ENCODE measurements at regions of chr11 and their contacts with region 1.

Region 1: GRCh38 chr11:121534131-121535093 is 81.6 kb upstream of the SORL1-AS1 start:
- DNase-seq: no peak
- ATAC-seq: peak in 1 of 2 donors; percentile 72
- H3K4me3 ChIP-seq: no peak overlapping the region
- H3K27ac ChIP-seq: no peak overlapping the region
- H3K4me1 ChIP-seq: no peaks in the 10 kb centered on the region
- H3K27me3 ChIP-seq: no peaks in the 10 kb centered on the region
- CTCF ChIP-seq: peak in 1 of 5 experiments; percentile 34
- POLR2A ChIP-seq: no peak

Region 2: DNA sequence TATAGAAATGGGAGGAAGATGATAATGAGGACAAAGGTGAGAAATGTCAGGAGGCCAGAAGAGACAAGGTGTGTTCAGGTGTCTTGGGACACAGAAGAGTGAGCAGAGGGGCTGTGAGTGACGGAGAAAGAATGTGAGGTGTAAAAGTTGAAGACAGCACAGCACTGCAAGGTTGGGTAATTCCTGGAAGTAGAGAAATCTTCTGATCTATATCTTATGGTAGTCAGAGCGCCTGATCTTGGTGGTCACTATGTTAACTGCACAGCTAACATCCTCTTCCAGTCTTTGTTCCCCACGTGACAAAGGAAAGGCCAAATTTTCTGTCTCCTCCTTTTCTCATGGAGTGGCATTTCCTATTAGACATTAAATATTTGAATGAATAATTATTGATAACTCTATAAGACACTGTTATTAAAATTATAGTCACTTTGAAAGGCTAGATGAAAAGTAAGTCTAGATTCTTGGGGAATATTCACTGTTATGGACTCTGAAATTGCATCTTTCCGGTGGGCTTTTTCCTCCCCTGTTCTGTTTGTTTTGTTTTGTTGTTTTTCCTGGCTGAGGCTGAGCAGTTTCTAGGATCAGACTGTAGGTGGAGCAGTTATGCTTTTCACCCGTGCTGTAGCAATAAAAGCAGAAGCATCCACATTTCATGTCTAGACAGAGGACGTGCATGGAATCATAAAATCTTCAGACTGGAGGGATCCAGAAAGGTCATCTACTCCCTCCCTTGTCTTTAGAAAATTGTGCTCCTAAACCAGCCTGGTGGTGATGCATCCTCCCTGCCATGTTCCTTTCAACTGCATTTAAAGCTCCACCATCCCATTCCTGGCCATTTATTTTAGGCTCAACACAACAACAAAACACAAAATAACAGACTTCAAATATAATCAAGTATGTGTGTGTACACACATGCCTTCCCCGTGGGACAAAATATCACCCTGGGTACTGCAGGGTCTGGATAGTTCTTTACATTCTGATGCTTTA is 215.3 kb before region 1 on chr11:
- in situ Hi-C with region 1: no loop called
- intact Hi-C with region 1: loop called (anchors 10 kb)
- DNase-seq: no peak
- ATAC-seq: peak in 1 of 2 donors; percentile 65
- H3K4me3 ChIP-seq: no peak overlapping the region
- H3K27ac ChIP-seq: no peak overlapping the region
- H3K4me1 ChIP-seq: no peaks in the 10 kb centered on the region
- H3K27me3 ChIP-seq: peaks cover 0 to 3% (median 0%) of the 10 kb centered on the region in 3 donors
- CTCF ChIP-seq: peak; percentile 15 to 56 (median 50)
- POLR2A ChIP-seq: no peak

Region 3: GRCh38 chr11:121451986-121452608 is 82.3 kb before region 1 on chr11 and contains the start of gene SORL1:
- in situ Hi-C with region 1: no loop called
- intact Hi-C with region 1: loop called (anchors 5 kb)
- DNase-seq: peak in 1 of 2 donors; percentile 22
- ATAC-seq: peak; percentile 64 to 67
- H3K4me3 ChIP-seq: peak within 1 kb of the TSS; percentile 49 to 65 (median 54)
- H3K27ac ChIP-seq: no peak within 1 kb of the TSS
- H3K4me1 ChIP-seq: peaks cover 0 to 4% of the 10 kb centered on the region in 2 donors
- H3K27me3 ChIP-seq: peaks cover 0 to 10% (median 0%) of the 10 kb centered on the region in 3 donors
- CTCF ChIP-seq: peak in 4 of 5 experiments; percentile 30 to 36 (median 33)
- POLR2A ChIP-seq: no peak
- total RNA-seq, gene SORL1: 0.78 to 2.7 (median 2.3) TPM

Region 4: DNA sequence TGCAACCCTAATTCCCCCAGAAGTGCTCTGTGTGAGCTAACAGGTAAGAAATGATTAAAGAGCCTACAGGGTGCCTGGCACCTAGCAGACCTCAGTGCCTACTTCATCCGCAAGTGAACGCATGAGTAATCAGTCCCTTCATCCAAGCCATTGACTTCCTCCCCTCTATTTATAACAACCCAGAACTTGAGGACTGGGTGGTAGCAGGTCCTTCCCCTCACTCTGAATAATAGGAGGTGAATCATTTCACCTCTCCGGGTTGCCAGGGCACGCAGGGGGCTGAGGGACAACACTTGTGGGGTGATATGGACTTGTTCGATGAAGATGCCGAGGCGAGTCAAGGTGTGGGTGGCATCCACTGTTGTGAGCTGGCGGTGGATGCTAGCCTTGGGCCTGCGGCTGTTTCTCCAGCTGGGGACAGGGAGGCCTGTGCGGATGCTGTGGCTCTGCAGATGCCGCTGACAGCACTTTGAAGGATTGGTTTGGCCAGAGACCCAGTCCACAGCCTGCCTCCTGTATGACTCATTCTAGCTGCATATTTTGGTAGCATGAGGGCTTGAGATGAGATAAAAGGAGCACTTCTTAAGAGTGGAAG is 70.0 kb before region 1 on chr11:
- in situ Hi-C with region 1: no loop called
- intact Hi-C with region 1: no loop called
- DNase-seq: no peak
- ATAC-seq: peak in 1 of 2 donors; percentile 53
- H3K4me3 ChIP-seq: no peak overlapping the region
- H3K27ac ChIP-seq: no peak overlapping the region
- H3K4me1 ChIP-seq: no peaks in the 10 kb centered on the region
- H3K27me3 ChIP-seq: no peaks in the 10 kb centered on the region
- CTCF ChIP-seq: no peak
- POLR2A ChIP-seq: no peak

Measured in gastrocnemius medialis (tissue), 4 donors.